ENCODE measurements at regions of chr3 and their contacts with region 1.

Region 1: DNA sequence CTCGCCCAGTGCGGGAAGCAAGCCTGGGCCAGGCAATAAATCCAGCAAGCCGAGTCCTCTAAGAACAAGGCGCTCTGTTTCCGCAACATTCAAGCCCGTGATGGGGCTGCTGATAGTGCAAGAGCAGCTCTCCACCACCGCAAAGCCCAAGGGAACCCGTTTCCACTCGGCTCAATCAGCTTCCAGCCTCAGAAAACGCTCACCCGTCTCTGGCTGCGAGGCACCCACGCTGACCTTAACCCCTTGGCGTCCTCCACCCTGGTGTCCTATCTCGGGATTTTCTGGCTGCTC is 17.8 kb downstream of the SPATA12 start:
- DNase-seq: no peak
- ATAC-seq: no peak
- H3K4me3 ChIP-seq: peak overlapping the region; percentile 75 to 94
- H3K27ac ChIP-seq: peak overlapping the region; percentile 72; the same call in 1 of the 2 replicates
- H3K4me1 ChIP-seq: peaks cover 18 to 77% of the 10 kb centered on the region in 2 experiments
- H3K27me3 ChIP-seq: no peaks in the 10 kb centered on the region
- CTCF ChIP-seq: no peak
- POLR2A ChIP-seq: no peak
- RAD21 ChIP-seq: no peak

Region 2: GRCh38 chr3:56694867-56695683 is 383.2 kb before region 1 on chr3:
- CTCF ChIA-PET with region 1: no interaction called
- POLR2A ChIA-PET with region 1: no interaction called
- RAD21 ChIA-PET with region 1: no interaction called
- intact Hi-C with region 1: loop called (anchors 5 kb)
- DNase-seq: no peak
- ATAC-seq: no peak
- H3K4me3 ChIP-seq: no peak overlapping the region
- H3K27ac ChIP-seq: no peak overlapping the region
- H3K4me1 ChIP-seq: peaks cover 7 to 15% of the 10 kb centered on the region in 2 experiments
- H3K27me3 ChIP-seq: no peaks in the 10 kb centered on the region
- CTCF ChIP-seq: no peak
- POLR2A ChIP-seq: no peak
- RAD21 ChIP-seq: no peak

Region 3: DNA sequence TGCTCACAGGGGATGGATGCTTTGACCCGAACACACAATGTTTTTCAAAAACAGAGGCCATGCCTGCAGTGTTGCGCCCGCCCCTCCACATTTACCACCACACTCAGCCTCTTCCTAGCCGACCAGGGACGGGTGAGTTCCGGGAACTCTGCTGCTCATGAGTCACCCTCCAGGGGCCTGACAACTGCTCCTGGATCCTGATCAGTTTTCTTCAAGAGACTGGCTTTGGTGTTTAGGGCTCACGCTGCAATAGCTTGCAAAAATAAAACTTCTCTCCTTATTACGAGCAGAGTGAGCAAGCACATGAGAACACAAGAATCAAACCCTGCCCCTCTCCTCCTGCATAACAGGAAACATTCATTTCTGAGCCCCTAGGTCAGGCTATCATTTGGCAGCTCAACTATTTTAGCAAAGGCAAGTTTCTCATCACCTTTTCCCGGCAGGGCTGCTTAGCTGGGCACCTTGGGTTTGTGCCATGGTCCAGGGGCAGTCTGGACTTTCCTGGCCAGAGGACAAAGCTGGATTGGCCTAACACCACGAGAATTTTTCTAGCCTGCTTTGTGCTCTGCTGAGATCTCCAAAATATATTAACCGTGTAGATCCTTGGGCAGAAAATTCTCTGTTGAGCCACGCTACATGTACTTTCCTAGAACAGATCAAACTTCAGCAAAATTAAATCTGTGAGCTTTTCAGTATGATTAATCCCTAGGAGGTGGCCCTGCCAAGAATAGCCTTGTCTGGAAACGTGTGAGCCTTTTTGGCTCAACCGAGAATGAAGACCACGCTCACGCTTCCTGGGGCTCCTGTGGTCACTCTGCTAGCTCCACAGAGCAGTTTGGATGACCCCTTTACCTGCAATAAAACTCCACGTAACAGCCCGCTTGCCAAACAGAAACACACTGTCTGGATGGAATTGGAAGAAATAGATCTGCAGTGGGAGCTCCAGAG is 70.5 kb before region 1 on chr3:
- CTCF ChIA-PET with region 1: no interaction called
- POLR2A ChIA-PET with region 1: no interaction called
- RAD21 ChIA-PET with region 1: no interaction called
- intact Hi-C with region 1: loop called (anchors 5 kb)
- DNase-seq: peak; percentile 54
- ATAC-seq: peak; percentile 87
- H3K4me3 ChIP-seq: peak overlapping the region; percentile 3 to 15; a peak in 3 of 4 replicates
- H3K27ac ChIP-seq: peak overlapping the region; percentile 84
- H3K4me1 ChIP-seq: peaks cover 39 to 40% of the 10 kb centered on the region in 2 experiments
- H3K27me3 ChIP-seq: no peaks in the 10 kb centered on the region
- CTCF ChIP-seq: no peak
- POLR2A ChIP-seq: no peak
- RAD21 ChIP-seq: no peak

Region 4: DNA sequence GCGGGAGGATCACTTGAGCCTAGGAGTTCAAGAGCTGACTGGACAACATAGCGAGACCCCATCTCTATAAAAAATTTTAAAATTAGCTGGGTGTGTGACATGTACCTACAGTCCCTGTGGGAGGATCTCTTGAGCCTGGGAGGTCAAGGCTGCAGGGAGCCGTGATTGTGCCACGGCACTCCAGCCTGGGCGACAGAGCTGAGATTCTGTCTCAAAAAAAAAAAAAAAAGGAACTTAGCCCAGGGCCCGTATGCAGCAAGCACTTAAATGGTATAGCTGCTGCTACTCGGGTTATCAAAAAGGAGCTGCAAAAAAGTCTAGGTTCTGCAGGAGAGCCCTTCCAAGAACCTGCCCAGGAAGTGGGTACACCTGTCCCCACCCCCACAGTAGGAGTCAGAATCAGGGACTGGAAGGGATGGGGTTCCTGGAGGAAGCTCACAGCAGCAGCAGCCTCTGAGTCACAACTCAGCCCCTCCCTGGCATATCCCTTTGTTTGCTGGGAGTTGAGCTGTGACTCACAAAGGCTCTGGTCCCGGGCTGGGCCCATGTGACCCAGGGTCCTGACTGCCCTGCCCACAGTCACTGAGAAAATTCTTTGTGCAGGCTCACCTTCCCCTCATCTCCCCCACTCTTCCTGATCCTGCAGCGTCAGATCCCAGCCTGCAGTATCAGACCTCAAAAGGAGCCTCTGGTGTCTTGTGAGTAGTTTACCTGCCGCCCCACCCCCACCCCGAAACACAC is 18.0 kb before region 1 on chr3 and contains the start of gene SPATA12:
- CTCF ChIA-PET with region 1: no interaction called
- POLR2A ChIA-PET with region 1: no interaction called
- RAD21 ChIA-PET with region 1: interaction called in 1 of 2 experiments, 3 read pairs
- intact Hi-C with region 1: loop called (anchors 2 kb)
- DNase-seq: peak; percentile 96
- ATAC-seq: peak; percentile 94
- H3K4me3 ChIP-seq: peak within 1 kb of the TSS; percentile 25 to 54
- H3K27ac ChIP-seq: peak within 1 kb of the TSS; percentile 81
- H3K4me1 ChIP-seq: peaks cover 53 to 88% of the 10 kb centered on the region in 2 experiments
- H3K27me3 ChIP-seq: no peaks in the 10 kb centered on the region
- CTCF ChIP-seq: no peak
- POLR2A ChIP-seq: no peak
- RAD21 ChIP-seq: no peak
- total RNA-seq, gene SPATA12: 0.22 TPM

Measured in HCT116 (cell line).